Prostate gland (tissue), 2 donors: ENCODE measurements at regions of chr9 and their contacts with region 1.

Region 1: GRCh38 chr9:136482793-136483588 is at the start of gene SEC16A:
- DNase-seq: peak; percentile 100
- H3K4me3 ChIP-seq: peak within 1 kb of the TSS; percentile 86 to 95
- H3K27ac ChIP-seq: peak within 1 kb of the TSS; percentile 100
- H3K4me1 ChIP-seq: peaks cover 6% of the 10 kb centered on the region
- H3K27me3 ChIP-seq: no peaks in the 10 kb centered on the region
- CTCF ChIP-seq: peak in 1 of 4 experiments; percentile 8
- POLR2A ChIP-seq: peak; percentile 95
- total RNA-seq, gene SEC16A: 94.7 to 111 TPM

Region 2: GRCh38 chr9:136545966-136546698 is 63.1 kb after region 1 on chr9 and contains the start of gene NOTCH1:
- intact Hi-C with region 1: loop called (anchors 2 kb)
- DNase-seq: peak; percentile 91
- H3K4me3 ChIP-seq: peak within 1 kb of the TSS; percentile 77 to 78
- H3K27ac ChIP-seq: peak within 1 kb of the TSS; percentile 93 to 95
- H3K4me1 ChIP-seq: peaks cover 22% of the 10 kb centered on the region
- H3K27me3 ChIP-seq: no peaks in the 10 kb centered on the region
- CTCF ChIP-seq: peak in 2 of 4 experiments; percentile 11 to 12
- POLR2A ChIP-seq: peak; percentile 76
- total RNA-seq, gene NOTCH1: 38.0 to 63.3 TPM

Region 3: GRCh38 chr9:136590821-136591752 is 108.1 kb after region 1 on chr9:
- intact Hi-C with region 1: no loop called
- DNase-seq: no peak
- H3K4me3 ChIP-seq: no peak overlapping the region
- H3K27ac ChIP-seq: no peak overlapping the region
- H3K4me1 ChIP-seq: no peaks in the 10 kb centered on the region
- H3K27me3 ChIP-seq: no peaks in the 10 kb centered on the region
- CTCF ChIP-seq: no peak
- POLR2A ChIP-seq: no peak

Region 4: DNA sequence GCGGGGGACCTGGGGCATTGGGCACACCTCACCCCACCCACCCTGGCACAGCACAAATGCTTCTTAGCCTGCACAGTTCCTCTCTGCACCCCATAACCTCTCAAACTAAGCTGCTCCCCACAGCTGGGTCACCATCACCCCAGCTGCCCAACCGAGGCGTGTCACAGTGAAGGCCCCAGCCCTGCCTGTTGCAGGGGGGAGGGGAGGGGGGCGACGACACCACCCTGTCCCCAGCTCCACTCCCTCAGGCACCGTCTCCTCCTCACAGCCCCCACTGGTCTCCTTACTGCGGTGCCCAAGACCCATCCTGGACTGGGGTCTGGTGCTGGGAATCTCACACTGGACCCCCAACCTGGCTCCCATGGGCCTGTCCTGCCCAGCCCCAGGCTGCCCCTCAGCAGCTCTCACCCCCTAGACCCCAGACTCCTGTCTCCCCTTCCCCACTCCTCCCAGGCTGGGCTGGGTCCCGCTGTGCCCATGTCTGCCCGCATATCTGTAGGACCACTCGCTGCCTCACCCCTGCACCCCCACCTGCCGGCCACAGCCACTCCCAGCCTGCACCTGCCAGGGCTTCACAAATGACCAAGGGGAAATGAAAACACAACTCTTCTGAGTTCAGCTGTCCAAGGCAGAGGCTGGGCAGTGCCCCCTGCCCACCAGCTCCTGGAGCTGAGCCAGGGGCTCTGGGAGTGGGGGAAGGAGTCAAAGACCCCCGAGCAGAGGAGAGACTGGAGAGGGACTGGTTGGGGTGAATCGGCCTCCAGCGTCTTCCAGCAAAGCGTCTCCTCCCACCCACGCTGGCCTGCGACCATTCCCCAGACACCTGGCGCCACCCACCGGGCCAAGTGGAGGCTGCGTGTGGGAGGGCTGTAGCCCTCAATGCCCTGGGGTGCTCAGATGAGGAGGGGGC is 147.0 kb after region 1 on chr9:
- intact Hi-C with region 1: loop called (anchors 1 kb)
- DNase-seq: no peak
- H3K4me3 ChIP-seq: no peak overlapping the region
- H3K27ac ChIP-seq: no peak overlapping the region
- H3K4me1 ChIP-seq: peaks cover 4% of the 10 kb centered on the region
- H3K27me3 ChIP-seq: no peaks in the 10 kb centered on the region
- CTCF ChIP-seq: peak in 2 of 4 experiments; percentile 47 to 56
- POLR2A ChIP-seq: no peak

Region 5: DNA sequence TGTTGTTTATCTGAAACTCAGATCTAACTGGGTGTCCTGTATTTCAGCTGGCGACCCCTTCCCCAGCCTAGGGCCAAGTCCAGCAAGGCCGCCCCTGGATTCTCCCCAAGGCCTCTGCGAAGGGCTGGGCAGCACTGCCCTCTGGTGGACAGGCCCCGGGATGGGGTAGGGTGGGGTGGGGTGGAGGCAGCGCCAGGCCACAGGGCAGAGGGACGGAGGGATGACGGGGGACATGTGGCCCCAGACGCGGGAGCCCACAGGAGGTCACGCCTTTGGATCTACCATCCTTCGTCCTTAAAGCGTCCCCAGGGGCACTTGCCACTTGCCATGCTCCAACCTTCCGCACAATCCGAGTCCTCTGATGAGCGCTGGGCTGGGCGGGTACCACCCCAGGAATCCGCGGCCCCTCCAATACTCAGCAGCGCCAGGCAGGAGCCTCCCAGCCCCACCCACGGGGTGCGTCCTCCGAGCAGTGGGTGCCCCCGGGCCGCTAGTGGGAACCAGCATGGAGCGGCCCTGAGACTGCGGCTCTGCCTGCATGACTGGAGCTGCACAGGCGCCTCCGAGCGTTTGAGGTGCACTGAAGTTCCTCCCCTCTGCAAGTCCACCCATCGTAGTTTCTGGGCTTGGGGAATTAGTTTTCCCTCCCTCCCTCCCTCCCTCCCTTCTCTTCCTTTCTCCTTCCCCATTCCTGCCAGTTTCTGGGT is 211.4 kb after region 1 on chr9:
- intact Hi-C with region 1: loop called (anchors 5 kb)
- DNase-seq: peak; percentile 42
- H3K4me3 ChIP-seq: no peak overlapping the region
- H3K27ac ChIP-seq: no peak overlapping the region
- H3K4me1 ChIP-seq: peaks cover 4% of the 10 kb centered on the region
- H3K27me3 ChIP-seq: no peaks in the 10 kb centered on the region
- CTCF ChIP-seq: peak in 3 of 4 experiments; percentile 66 to 76 (median 73)
- POLR2A ChIP-seq: no peak